GM18951 (cell line): ENCODE measurements at regions of chrX and their contacts with region 1.

Region 1: GRCh38 chrX:25144043-25144940 is 128.5 kb upstream of the ARX start:
- POLR2A ChIP-seq: no peak

Region 2: DNA sequence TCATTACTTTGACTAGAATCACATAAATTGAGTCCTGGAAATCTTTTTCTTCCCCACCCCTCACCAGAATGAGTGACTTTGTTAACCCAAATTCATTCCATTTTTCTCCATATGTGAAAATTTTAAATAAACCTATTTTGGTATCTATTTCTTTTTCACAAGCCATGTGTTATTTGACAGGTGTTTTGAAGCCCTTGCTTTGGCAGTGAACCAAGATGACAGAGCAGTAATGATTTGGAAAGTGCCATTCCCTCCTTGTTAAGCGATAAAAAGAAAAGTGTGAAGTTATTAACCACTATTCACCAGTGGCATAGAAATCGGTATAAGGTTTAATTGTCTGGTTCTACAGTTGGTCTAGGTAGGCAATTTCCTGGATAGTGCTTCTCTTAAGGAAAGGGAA is 384.5 kb before region 1 on chrX:
- in situ Hi-C with region 1: loop called (anchors 5 kb)
- POLR2A ChIP-seq: no peak

Region 3: DNA sequence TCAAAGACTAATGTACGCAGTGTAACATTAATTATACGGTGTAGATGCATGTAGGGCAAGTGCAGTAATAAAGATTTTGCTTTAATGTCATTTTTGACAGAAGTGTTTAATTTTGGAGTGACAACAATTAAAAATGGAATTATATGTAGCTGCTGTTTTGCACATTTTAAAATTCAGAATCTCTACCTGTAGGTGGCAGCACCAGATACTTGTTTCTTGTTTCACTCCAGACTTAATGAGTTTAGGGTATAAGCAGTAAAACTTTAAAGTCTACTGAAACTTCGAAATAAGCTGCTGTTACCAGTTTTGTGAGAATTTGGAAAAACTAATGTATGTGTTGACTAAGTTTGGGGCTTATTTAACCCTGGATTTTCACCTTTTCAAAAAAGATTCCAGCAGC is 305.7 kb before region 1 on chrX:
- in situ Hi-C with region 1: loop called (anchors 10 kb)
- POLR2A ChIP-seq: no peak

Region 4: GRCh38 chrX:25020905-25021449 is 123.3 kb before region 1 on chrX:
- in situ Hi-C with region 1: loop called (anchors 10 kb)
- POLR2A ChIP-seq: no peak